CD4-positive, alpha-beta memory T cell (primary cell): ENCODE measurements at regions of chr4 and their contacts with region 1.

Region 1: DNA sequence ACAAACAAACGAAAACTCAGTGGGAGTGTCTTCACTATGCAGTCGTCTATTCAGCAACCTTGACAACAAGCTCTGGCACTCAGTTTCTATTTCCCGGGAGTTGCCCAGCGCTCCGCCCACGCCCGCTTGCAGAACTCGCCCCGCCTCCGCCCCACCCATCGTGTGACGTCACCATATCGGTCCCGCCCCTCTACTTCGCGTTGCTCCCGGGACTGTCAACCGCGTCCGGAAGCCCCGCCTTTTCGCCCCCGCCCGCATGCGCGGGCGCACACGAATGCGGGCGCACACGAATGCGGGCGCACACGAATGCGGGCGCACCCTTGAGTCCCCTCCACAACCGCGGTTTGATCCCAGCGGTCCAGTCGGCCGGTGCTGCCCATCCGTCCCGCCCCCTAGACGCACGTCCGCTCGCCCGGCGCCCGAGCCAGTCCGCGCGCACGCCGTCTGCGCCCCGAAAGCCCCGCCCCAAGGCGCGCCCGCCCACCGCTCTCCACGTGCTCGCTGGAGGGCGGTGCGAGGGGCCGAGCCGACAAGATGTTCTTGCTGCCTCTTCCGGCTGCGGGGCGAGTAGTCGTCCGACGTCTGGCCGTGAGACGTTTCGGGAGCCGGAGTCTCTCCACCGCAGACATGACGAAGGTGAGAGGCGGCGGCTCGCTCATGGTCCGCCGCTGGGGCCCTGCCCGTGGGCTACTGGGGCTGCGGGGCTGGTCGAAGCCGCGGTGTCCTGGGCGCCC is at the start of gene LAP3:
- DNase-seq: peak; percentile 98 to 99 (median 98)
- H3K4me3 ChIP-seq: peak within 1 kb of the TSS; percentile 79 to 97
- H3K4me3 Mint-ChIP-seq: peak within 1 kb of the TSS; percentile 88 to 94 (median 94)
- H3K27ac ChIP-seq: peak within 1 kb of the TSS; percentile 91
- H3K27ac Mint-ChIP-seq: peak within 1 kb of the TSS; percentile 93 to 99 (median 98)
- H3K4me1 ChIP-seq: peaks cover 23% of the 10 kb centered on the region
- H3K4me1 Mint-ChIP-seq: peaks cover 13 to 31% (median 23%) of the 10 kb centered on the region in 4 donors
- H3K27me3 ChIP-seq: no peaks in the 10 kb centered on the region
- H3K27me3 Mint-ChIP-seq: no peaks in the 10 kb centered on the region
- total RNA-seq, gene LAP3: 25.6 to 27.6 TPM

Region 2: DNA sequence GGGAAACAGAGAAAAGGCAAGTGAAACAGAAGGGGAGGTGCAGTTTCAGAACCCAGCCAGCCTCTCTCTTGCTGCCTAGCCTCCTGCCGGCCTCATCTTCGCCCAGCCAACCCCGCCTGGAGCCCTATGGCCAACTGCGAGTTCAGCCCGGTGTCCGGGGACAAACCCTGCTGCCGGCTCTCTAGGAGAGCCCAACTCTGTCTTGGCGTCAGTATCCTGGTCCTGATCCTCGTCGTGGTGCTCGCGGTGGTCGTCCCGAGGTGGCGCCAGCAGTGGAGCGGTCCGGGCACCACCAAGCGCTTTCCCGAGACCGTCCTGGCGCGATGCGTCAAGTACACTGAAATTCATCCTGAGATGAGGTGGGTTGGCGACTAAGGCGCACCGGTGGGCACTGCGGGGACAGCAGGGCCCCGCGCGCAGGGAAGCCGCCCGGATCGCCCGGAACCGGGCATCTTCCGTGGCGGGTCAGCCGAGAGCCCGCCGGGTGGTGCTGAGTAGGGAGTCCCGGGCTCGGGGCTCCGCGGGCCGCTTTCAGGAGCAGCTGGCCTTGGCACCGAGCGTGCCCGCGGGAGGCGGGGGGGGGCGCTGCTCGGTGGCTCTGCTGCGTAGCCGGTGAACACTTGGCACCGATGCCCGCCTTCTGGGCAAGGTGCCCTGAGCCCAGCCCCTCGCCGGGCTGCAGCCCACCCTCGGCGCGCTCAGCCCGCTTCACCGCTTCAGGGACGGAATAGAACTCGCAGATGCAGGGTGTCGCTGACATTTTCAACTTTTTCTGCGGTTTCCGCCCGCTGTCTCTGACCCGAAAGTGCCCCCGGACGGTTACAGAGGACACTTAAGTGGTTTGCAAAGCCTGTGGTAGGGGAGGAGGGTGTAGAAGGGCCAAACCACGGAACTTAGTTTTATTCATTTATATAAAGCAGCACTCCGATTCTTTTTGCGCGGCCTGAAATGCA is 1798.5 kb before region 1 on chr4 and contains the start of gene CD38:
- CTCF ChIA-PET with region 1: no interaction called
- POLR2A ChIA-PET with region 1: no interaction called
- intact Hi-C with region 1: no loop called
- DNase-seq: peak in 4 of 5 donors; percentile 33 to 51 (median 45)
- H3K4me3 ChIP-seq: peak within 1 kb of the TSS; percentile 48
- H3K4me3 Mint-ChIP-seq: peak within 1 kb of the TSS; percentile 78 to 91 (median 88)
- H3K27ac ChIP-seq: no peak within 1 kb of the TSS
- H3K27ac Mint-ChIP-seq: peak within 1 kb of the TSS in 5 of 7 donors; percentile 20 to 79 (median 47)
- H3K4me1 ChIP-seq: peaks cover 34% of the 10 kb centered on the region
- H3K4me1 Mint-ChIP-seq: peaks cover 29 to 50% (median 40%) of the 10 kb centered on the region in 4 donors
- H3K27me3 ChIP-seq: no peaks in the 10 kb centered on the region
- H3K27me3 Mint-ChIP-seq: peaks cover 0 to 2% of the 10 kb centered on the region in 2 donors
- total RNA-seq, gene CD38: 1.00 to 1.7 TPM

Region 3: GRCh38 chr4:16225863-16226815 is 1351.0 kb before region 1 on chr4 and contains the start of gene TAPT1:
- CTCF ChIA-PET with region 1: no interaction called
- POLR2A ChIA-PET with region 1: interaction called, 3 read pairs
- intact Hi-C with region 1: loop called (anchors 1 kb)
- DNase-seq: peak; percentile 70 to 80 (median 72)
- H3K4me3 ChIP-seq: peak within 1 kb of the TSS; percentile 67 to 97
- H3K4me3 Mint-ChIP-seq: peak within 1 kb of the TSS; percentile 92 to 97 (median 93)
- H3K27ac ChIP-seq: peak within 1 kb of the TSS; percentile 69
- H3K27ac Mint-ChIP-seq: peak within 1 kb of the TSS; percentile 96 to 97 (median 96)
- H3K4me1 ChIP-seq: peaks cover 50% of the 10 kb centered on the region
- H3K4me1 Mint-ChIP-seq: peaks cover 36 to 72% (median 47%) of the 10 kb centered on the region in 4 donors
- H3K27me3 ChIP-seq: no peaks in the 10 kb centered on the region
- H3K27me3 Mint-ChIP-seq: no peaks in the 10 kb centered on the region
- total RNA-seq, gene TAPT1: 55.1 to 57.5 TPM

Region 4: GRCh38 chr4:17511950-17512795 is 64.9 kb before region 1 on chr4 and contains the start of gene QDPR:
- CTCF ChIA-PET with region 1: interaction called, 4 read pairs
- POLR2A ChIA-PET with region 1: interaction called, 3 read pairs
- intact Hi-C with region 1: loop called (anchors 1 kb)
- DNase-seq: peak; percentile 60 to 70 (median 70)
- H3K4me3 ChIP-seq: peak within 1 kb of the TSS; percentile 38 to 75
- H3K4me3 Mint-ChIP-seq: peak within 1 kb of the TSS; percentile 96 to 100 (median 98)
- H3K27ac ChIP-seq: peak within 1 kb of the TSS; percentile 46
- H3K27ac Mint-ChIP-seq: peak within 1 kb of the TSS; percentile 74 to 96 (median 91)
- H3K4me1 ChIP-seq: peaks cover 28% of the 10 kb centered on the region
- H3K4me1 Mint-ChIP-seq: peaks cover 23 to 32% (median 30%) of the 10 kb centered on the region in 4 donors
- H3K27me3 ChIP-seq: no peaks in the 10 kb centered on the region
- H3K27me3 Mint-ChIP-seq: peaks cover 9% of the 10 kb centered on the region in 2 donors
- total RNA-seq, gene QDPR: 21.8 to 24.4 TPM

Region 5: GRCh38 chr4:17614416-17615299 is 37.6 kb after region 1 on chr4 and contains the start of gene MED28:
- CTCF ChIA-PET with region 1: interaction called, 13 read pairs
- POLR2A ChIA-PET with region 1: interaction called, 45 read pairs
- intact Hi-C with region 1: loop called (anchors 1 kb)
- DNase-seq: peak; percentile 92 to 96 (median 94)
- H3K4me3 ChIP-seq: peak within 1 kb of the TSS; percentile 82 to 100
- H3K4me3 Mint-ChIP-seq: peak within 1 kb of the TSS; percentile 95 to 100 (median 99)
- H3K27ac ChIP-seq: peak within 1 kb of the TSS; percentile 95
- H3K27ac Mint-ChIP-seq: peak within 1 kb of the TSS; percentile 95 to 100 (median 96)
- H3K4me1 ChIP-seq: peaks cover 45% of the 10 kb centered on the region
- H3K4me1 Mint-ChIP-seq: peaks cover 25 to 61% (median 44%) of the 10 kb centered on the region in 4 donors
- H3K27me3 ChIP-seq: no peaks in the 10 kb centered on the region
- H3K27me3 Mint-ChIP-seq: no peaks in the 10 kb centered on the region
- total RNA-seq, gene MED28: 85.4 to 87.0 TPM

Region 6: GRCh38 chr4:17753490-17754085 is 176.5 kb after region 1 on chr4:
- CTCF ChIA-PET with region 1: no interaction called
- POLR2A ChIA-PET with region 1: no interaction called
- intact Hi-C with region 1: no loop called
- DNase-seq: no peak
- H3K4me3 ChIP-seq: no peak overlapping the region
- H3K4me3 Mint-ChIP-seq: no peak overlapping the region
- H3K27ac ChIP-seq: no peak overlapping the region
- H3K27ac Mint-ChIP-seq: no peak overlapping the region
- H3K4me1 ChIP-seq: no peaks in the 10 kb centered on the region
- H3K4me1 Mint-ChIP-seq: no peaks in the 10 kb centered on the region
- H3K27me3 ChIP-seq: no peaks in the 10 kb centered on the region
- H3K27me3 Mint-ChIP-seq: peaks cover 5 to 8% of the 10 kb centered on the region in 2 donors